ENCODE measurements at regions of chr12 and their contacts with region 1.

Region 1: GRCh38 chr12:10613349-10614055 is at the start of gene MAGOHB:
- DNase-seq: peak; percentile 97 to 99
- H3K4me3 ChIP-seq: peak within 1 kb of the TSS; percentile 82 to 87 (median 83)
- H3K27ac ChIP-seq: peak within 1 kb of the TSS; percentile 80 to 96 (median 89)
- H3K4me1 ChIP-seq: peaks cover 11 to 44% (median 27%) of the 10 kb centered on the region in 4 donors
- H3K27me3 ChIP-seq: no peaks in the 10 kb centered on the region
- CTCF ChIP-seq: peak in 1 of 7 experiments; percentile 29
- EP300 ChIP-seq: no peak
- POLR2A ChIP-seq: peak in 1 of 4 donors; percentile 58
- total RNA-seq, gene MAGOHB: 0.58 to 33.2 (median 7.2) TPM

Region 2: GRCh38 chr12:10521555-10521954 is 91.9 kb before region 1 on chr12:
- intact Hi-C with region 1: no loop called
- DNase-seq: no peak
- H3K4me3 ChIP-seq: no peak overlapping the region
- H3K27ac ChIP-seq: no peak overlapping the region
- H3K4me1 ChIP-seq: no peaks in the 10 kb centered on the region
- H3K27me3 ChIP-seq: no peaks in the 10 kb centered on the region
- CTCF ChIP-seq: no peak
- EP300 ChIP-seq: no peak
- POLR2A ChIP-seq: no peak

Region 3: DNA sequence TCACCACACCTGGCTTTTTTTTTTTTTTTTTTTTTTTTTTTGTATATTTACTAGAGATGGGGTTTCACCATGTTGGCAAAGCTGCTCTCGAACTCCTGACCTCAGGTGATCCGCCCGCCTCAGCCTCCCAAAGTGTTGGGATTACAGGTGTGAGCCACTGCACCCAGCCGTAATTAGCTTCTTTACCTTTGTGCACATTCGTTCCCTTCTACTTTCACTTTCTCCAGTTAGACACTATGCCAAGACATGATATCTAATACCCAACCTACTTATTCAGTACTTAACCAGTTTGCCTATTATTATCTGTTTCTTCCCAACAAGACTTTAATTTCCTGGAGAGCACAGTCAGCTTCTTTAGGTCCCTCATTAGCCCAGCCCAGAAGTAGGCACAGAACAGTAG is 55.0 kb after region 1 on chr12:
- intact Hi-C with region 1: no loop called
- DNase-seq: no peak
- H3K4me3 ChIP-seq: peak overlapping the region in 1 of 4 donors; percentile 5
- H3K27ac ChIP-seq: peak overlapping the region in 4 of 5 donors; percentile 57 to 81 (median 68)
- H3K4me1 ChIP-seq: peaks cover 0 to 20% (median 11%) of the 10 kb centered on the region in 4 donors
- H3K27me3 ChIP-seq: peaks cover 0 to 7% (median 0%) of the 10 kb centered on the region in 3 donors
- CTCF ChIP-seq: no peak
- EP300 ChIP-seq: no peak
- POLR2A ChIP-seq: no peak

Region 4: GRCh38 chr12:10749700-10750384 is 136.3 kb after region 1 on chr12:
- intact Hi-C with region 1: loop called (anchors 10 kb)
- DNase-seq: peak; percentile 70 to 94
- H3K4me3 ChIP-seq: peak overlapping the region in 3 of 4 donors; percentile 22 to 31 (median 22)
- H3K27ac ChIP-seq: peak overlapping the region in 4 of 5 donors; percentile 3 to 77 (median 40)
- H3K4me1 ChIP-seq: peaks cover 0 to 10% (median 3%) of the 10 kb centered on the region in 4 donors
- H3K27me3 ChIP-seq: peaks cover 0 to 12% (median 0%) of the 10 kb centered on the region in 3 donors
- CTCF ChIP-seq: peak in 6 of 7 experiments; percentile 80 to 98 (median 88)
- EP300 ChIP-seq: peak; percentile 71
- POLR2A ChIP-seq: no peak